ENCODE measurements at regions of chr3 and their contacts with region 1.

Region 1: DNA sequence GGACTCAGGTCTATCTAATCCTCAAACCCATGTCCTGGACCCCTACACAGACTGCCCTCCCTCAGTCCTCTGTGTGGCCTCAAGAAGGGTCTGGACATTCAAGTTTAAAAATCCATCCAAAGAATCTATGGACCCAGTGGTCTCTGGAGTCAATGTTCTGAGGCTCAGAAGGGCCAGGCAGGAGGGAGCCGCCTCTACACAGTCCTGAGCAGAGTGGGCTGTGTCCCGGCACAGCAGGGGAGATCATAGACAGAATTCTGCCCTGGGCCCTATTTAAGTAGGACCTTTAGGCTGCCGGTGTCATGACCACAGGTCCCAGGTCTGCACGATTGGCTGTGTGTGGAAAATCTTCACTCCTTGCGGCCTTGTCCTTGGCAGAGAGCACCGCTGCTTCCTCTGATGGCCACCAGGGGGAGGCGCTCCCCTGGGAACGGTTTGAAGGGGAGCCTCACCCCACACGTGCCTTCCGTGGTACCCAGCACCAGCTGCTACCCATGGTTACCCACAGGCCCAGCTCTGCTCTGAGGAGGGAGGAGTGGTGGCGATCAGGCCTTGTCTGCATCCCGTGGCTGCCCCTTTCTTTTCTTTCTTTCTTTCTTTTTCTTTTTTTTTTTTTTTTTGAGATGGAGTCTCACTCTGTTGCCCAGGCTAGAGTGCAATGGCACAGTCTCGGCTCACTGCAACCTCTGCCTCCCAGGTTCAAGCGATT is 37.9 kb downstream of the CHRD start:
- DNase-seq: peak; percentile 35 to 87 (median 70)

Region 2: DNA sequence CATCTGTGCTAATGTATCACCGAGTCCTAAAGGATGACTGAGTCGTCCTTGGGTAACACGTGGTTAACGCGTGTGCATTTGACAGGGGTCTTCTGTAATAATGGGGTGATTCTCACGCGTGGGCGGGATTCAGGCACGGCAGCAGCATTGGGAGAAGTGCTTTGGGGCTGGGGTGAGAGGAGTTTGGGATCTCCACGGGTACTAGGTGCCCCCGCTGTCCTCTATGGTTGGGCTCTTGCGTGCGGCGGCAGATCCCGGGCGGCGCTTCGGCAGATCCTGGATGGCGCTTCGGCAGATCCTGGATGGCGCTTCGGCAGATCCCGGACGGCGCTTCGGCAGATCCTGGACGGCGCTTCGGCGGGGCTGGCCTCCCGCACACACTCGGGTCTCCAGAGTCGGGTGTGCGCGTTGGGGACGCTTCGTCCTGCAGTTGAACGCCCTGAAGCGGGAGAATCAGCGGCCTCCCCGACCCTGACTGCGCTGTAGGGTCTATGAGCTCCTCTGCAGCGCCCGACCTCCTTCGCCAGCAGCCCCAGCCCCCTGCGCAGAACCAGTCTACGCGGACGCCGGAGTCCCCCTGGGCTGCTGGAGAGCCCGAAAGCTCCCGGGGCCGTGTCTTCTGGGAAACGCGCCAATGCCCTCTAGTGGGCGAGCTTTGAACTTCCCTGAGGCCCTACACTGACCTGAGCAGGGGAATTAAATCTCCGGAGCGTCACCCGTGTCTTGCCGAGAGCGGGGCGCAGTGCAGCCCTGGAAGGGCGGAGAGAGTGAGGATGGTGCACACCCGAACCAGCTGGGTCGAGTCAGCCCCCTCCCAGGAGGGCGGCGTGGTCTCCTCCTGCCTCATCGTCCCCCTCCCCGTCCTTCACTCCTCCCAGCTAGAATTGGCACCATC is 95.8 kb after region 1 on chr3:
- intact Hi-C with region 1: loop called (anchors 10 kb)
- DNase-seq: peak; percentile 69 to 93 (median 86)